CD8-positive, alpha-beta T cell (primary cell): ENCODE measurements at regions of chr2 and their contacts with region 1.

Region 1: GRCh38 chr2:201231781-201232466 is 28.4 kb upstream of the CASP8 start:
- DNase-seq: peak; percentile 77 to 96 (median 92)
- ATAC-seq: peak; percentile 46
- H3K4me3 ChIP-seq: peak overlapping the region in 1 of 2 experiments; percentile 4
- H3K4me3 Mint-ChIP-seq: peak overlapping the region; percentile 58
- H3K27ac ChIP-seq: peak overlapping the region in 1 of 2 experiments; percentile 47
- H3K27ac Mint-ChIP-seq: peak overlapping the region; percentile 89
- H3K4me1 ChIP-seq: peaks cover 40% of the 10 kb centered on the region
- H3K4me1 Mint-ChIP-seq: peaks cover 60% of the 10 kb centered on the region
- H3K27me3 ChIP-seq: no peaks in the 10 kb centered on the region
- H3K27me3 Mint-ChIP-seq: no peaks in the 10 kb centered on the region
- CTCF ChIP-seq: peak; percentile 91

Region 2: DNA sequence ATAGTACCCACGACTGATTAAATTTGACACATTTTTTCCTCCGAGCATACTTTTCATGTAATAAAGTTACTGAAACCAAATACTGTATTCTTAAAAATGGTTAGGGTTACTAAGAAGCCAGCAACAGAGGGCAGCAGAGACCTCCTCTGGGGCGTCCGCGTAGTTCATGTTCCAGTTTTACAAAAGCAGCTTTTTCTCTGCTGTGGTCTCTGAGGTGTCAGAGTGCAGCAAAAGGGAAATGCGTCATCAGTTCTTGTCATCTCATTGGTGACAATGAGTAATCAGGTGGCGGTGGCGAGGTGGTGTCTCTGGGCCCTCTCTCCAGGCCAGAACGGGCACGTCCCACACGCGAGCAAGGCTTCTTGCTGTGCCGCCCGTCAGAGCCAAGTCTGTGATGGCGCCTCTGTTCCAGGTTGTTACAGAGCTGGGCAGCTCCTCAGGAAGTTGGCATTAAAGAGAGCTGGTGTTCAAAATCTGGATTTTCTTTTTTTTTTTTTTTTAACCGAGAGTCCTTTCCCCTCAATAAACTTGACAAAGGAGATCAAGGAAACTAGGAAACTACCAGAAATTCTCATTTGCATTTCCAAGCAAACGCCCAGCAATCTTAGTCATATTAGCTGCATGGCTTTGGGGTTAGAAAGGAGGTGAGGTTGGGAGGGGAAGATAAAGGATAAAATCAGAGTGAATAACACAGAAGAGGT is 518.8 kb before region 1 on chr2:
- CTCF ChIA-PET with region 1: no interaction called
- POLR2A ChIA-PET with region 1: no interaction called
- intact Hi-C with region 1: loop called in 1 of 2 experiments (anchors 1 kb)
- DNase-seq: peak; percentile 84 to 98 (median 92)
- ATAC-seq: peak; percentile 94
- H3K4me3 ChIP-seq: peak overlapping the region; percentile 5 to 25
- H3K4me3 Mint-ChIP-seq: peak overlapping the region; percentile 68
- H3K27ac ChIP-seq: peak overlapping the region; percentile 75 to 98
- H3K27ac Mint-ChIP-seq: peak overlapping the region; percentile 98
- H3K4me1 ChIP-seq: peaks cover 8% of the 10 kb centered on the region
- H3K4me1 Mint-ChIP-seq: peaks cover 11% of the 10 kb centered on the region
- H3K27me3 ChIP-seq: no peaks in the 10 kb centered on the region
- H3K27me3 Mint-ChIP-seq: peaks cover 3% of the 10 kb centered on the region
- CTCF ChIP-seq: peak; percentile 85

Region 3: DNA sequence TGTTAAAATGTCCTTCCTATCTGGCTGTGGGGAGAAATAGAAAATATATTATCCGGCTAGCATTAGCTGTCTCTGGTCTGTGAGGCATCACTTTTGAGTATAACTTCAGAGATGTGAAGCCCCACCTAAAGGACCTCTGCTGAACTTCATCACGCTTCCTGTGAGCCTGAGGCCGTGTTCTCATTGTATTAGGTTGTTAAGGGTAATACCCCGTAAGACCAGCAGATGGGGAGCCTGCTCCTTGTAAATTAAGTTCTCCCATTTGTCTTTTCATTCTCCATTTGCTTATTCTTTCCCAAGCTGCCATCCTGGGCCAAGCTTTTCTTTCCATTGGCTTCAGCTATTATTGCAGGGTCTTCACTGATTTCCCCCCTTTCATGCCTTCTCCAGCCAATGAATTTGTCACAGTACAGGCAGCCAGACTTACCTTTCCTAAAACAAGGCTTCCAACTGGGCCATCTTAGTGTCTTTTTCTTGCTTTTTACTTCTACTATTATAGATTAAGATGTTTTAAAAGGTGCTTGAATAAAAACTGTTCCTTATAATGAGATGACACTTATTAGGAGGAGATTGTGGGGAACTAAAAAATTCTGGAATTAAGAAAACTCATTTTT is 330.4 kb before region 1 on chr2:
- CTCF ChIA-PET with region 1: interaction called, 14 read pairs
- POLR2A ChIA-PET with region 1: interaction called, 3 read pairs
- intact Hi-C with region 1: loop called (anchors 1 to 2 kb)
- DNase-seq: peak; percentile 36 to 92 (median 73)
- ATAC-seq: peak; percentile 100
- H3K4me3 ChIP-seq: no peak overlapping the region
- H3K4me3 Mint-ChIP-seq: no peak overlapping the region
- H3K27ac ChIP-seq: peak overlapping the region in 1 of 2 experiments; percentile 4
- H3K27ac Mint-ChIP-seq: peak overlapping the region; percentile 45
- H3K4me1 ChIP-seq: peaks cover 4% of the 10 kb centered on the region
- H3K4me1 Mint-ChIP-seq: peaks cover 7% of the 10 kb centered on the region
- H3K27me3 ChIP-seq: no peaks in the 10 kb centered on the region
- H3K27me3 Mint-ChIP-seq: no peaks in the 10 kb centered on the region
- CTCF ChIP-seq: peak; percentile 84

Region 4: GRCh38 chr2:201176081-201176481 is 55.8 kb before region 1 on chr2:
- CTCF ChIA-PET with region 1: interaction called, 147 read pairs
- POLR2A ChIA-PET with region 1: interaction called, 4 read pairs
- intact Hi-C with region 1: no loop called
- DNase-seq: no peak
- ATAC-seq: no peak
- H3K4me3 ChIP-seq: no peak overlapping the region
- H3K4me3 Mint-ChIP-seq: no peak overlapping the region
- H3K27ac ChIP-seq: no peak overlapping the region
- H3K27ac Mint-ChIP-seq: no peak overlapping the region
- H3K4me1 ChIP-seq: no peaks in the 10 kb centered on the region
- H3K4me1 Mint-ChIP-seq: peaks cover 12% of the 10 kb centered on the region
- H3K27me3 ChIP-seq: no peaks in the 10 kb centered on the region
- H3K27me3 Mint-ChIP-seq: no peaks in the 10 kb centered on the region
- CTCF ChIP-seq: no peak

Region 5: GRCh38 chr2:201220102-201220570 is 11.8 kb before region 1 on chr2:
- CTCF ChIA-PET with region 1: interaction called, 61 read pairs
- POLR2A ChIA-PET with region 1: interaction called, 6 read pairs
- intact Hi-C with region 1: no loop called
- DNase-seq: no peak
- ATAC-seq: no peak
- H3K4me3 ChIP-seq: no peak overlapping the region
- H3K4me3 Mint-ChIP-seq: no peak overlapping the region
- H3K27ac ChIP-seq: no peak overlapping the region
- H3K27ac Mint-ChIP-seq: peak overlapping the region; percentile 82
- H3K4me1 ChIP-seq: peaks cover 23% of the 10 kb centered on the region
- H3K4me1 Mint-ChIP-seq: peaks cover 56% of the 10 kb centered on the region
- H3K27me3 ChIP-seq: no peaks in the 10 kb centered on the region
- H3K27me3 Mint-ChIP-seq: no peaks in the 10 kb centered on the region
- CTCF ChIP-seq: no peak

Region 6: GRCh38 chr2:201275990-201276389 is 44.1 kb after region 1 on chr2:
- CTCF ChIA-PET with region 1: interaction called, 49 read pairs
- POLR2A ChIA-PET with region 1: interaction called, 5 read pairs
- intact Hi-C with region 1: loop called in 1 of 2 experiments (anchors 5 kb)
- DNase-seq: peak in 1 of 9 experiments; percentile 40
- ATAC-seq: peak; percentile 51
- H3K4me3 ChIP-seq: no peak overlapping the region
- H3K4me3 Mint-ChIP-seq: no peak overlapping the region
- H3K27ac ChIP-seq: no peak overlapping the region
- H3K27ac Mint-ChIP-seq: peak overlapping the region; percentile 25
- H3K4me1 ChIP-seq: peaks cover 20% of the 10 kb centered on the region
- H3K4me1 Mint-ChIP-seq: peaks cover 55% of the 10 kb centered on the region
- H3K27me3 ChIP-seq: no peaks in the 10 kb centered on the region
- H3K27me3 Mint-ChIP-seq: no peaks in the 10 kb centered on the region
- CTCF ChIP-seq: no peak

Region 7: GRCh38 chr2:201780674-201781581 is 549.0 kb after region 1 on chr2 and contains the start of gene ALS2:
- CTCF ChIA-PET with region 1: interaction called, 3 read pairs
- POLR2A ChIA-PET with region 1: interaction called, 3 read pairs
- intact Hi-C with region 1: loop called (anchors 1 to 5 kb)
- DNase-seq: peak; percentile 88 to 97 (median 94)
- ATAC-seq: peak; percentile 91
- H3K4me3 ChIP-seq: peak within 1 kb of the TSS; percentile 80 to 89
- H3K4me3 Mint-ChIP-seq: peak within 1 kb of the TSS; percentile 98
- H3K27ac ChIP-seq: peak within 1 kb of the TSS; percentile 94
- H3K27ac Mint-ChIP-seq: peak within 1 kb of the TSS; percentile 98
- H3K4me1 ChIP-seq: peaks cover 16% of the 10 kb centered on the region
- H3K4me1 Mint-ChIP-seq: peaks cover 27% of the 10 kb centered on the region
- H3K27me3 ChIP-seq: no peaks in the 10 kb centered on the region
- H3K27me3 Mint-ChIP-seq: peaks cover 3% of the 10 kb centered on the region
- CTCF ChIP-seq: no peak
- total RNA-seq, gene ALS2: 6.6 to 9.0 TPM